H1 (cell line): ENCODE measurements at regions of chr5 and their contacts with region 1.

Region 1: DNA sequence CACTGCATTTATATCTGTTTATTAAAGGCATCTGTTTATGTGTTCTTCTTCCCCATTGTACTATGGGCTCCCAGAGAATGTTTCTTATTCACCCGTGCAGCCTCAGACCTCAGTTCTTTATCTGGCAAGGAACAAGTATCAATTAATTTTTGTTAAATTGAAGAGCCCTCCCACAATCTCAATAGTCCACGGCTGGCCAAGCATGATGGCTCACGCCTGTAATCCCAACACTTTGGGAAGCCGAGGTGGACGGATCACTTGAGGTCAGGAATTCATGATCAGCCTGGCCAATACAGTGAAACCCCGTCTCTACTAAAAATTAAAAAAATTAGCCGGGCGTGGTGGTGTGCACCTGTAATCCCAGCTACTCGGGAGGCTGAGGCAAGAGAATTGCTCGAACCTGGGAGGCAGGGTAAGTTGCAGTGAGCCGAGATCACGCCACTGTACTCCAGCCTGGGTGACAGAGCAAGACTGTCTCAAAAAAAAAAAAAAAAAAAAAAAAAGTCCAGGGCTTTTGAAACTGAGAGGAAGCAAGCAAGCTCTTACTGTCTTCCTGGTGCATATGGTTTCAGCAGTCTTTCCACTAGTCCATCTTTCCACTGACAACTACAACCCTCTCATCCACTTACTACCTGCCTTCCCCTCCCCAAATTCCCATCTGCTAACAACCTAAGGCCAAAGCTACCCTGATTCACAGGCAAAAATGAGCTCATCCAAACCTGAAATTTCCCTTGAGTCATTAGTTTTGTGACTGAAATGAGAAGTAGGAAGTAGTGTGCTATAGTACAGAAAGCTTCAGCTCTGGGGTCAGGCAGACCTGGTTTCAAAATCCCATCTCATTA is 2.3 kb upstream of the HK3 start:
- DNase-seq: no peak
- H3K4me3 ChIP-seq: no peak overlapping the region
- H3K27ac ChIP-seq: no peak overlapping the region
- H3K4me1 ChIP-seq: peaks cover 0 to 6% (median 3%) of the 10 kb centered on the region in 4 experiments; a peak in 5 of 7 replicates
- H3K27me3 ChIP-seq: no peaks in the 10 kb centered on the region
- CTCF ChIP-seq: no peak
- EP300 ChIP-seq: no peak
- POLR2A ChIP-seq: no peak
- RAD21 ChIP-seq: no peak

Region 2: GRCh38 chr5:176870110-176870593 is 31.3 kb before region 1 on chr5:
- CTCF ChIA-PET with region 1: interaction called, 21 read pairs
- POLR2A ChIA-PET with region 1: no interaction called
- DNase-seq: peak; percentile 21 to 84
- H3K4me3 ChIP-seq: no peak overlapping the region
- H3K27ac ChIP-seq: no peak overlapping the region
- H3K4me1 ChIP-seq: peaks cover 0 to 15% (median 5%) of the 10 kb centered on the region in 4 experiments; a peak in 6 of 7 replicates
- H3K27me3 ChIP-seq: no peaks in the 10 kb centered on the region
- CTCF ChIP-seq: peak in 2 of 3 experiments; percentile 80 to 92; a peak in 3 of 4 replicates
- EP300 ChIP-seq: no peak
- POLR2A ChIP-seq: no peak
- RAD21 ChIP-seq: peak; percentile 58 to 77

Region 3: GRCh38 chr5:176875783-176876505 is 25.5 kb before region 1 on chr5:
- CTCF ChIA-PET with region 1: interaction called, 21 read pairs
- POLR2A ChIA-PET with region 1: no interaction called
- DNase-seq: no peak
- H3K4me3 ChIP-seq: no peak overlapping the region
- H3K27ac ChIP-seq: no peak overlapping the region
- H3K4me1 ChIP-seq: peaks cover 0 to 4% (median 1%) of the 10 kb centered on the region in 4 experiments; a peak in 3 of 7 replicates
- H3K27me3 ChIP-seq: no peaks in the 10 kb centered on the region
- CTCF ChIP-seq: no peak
- EP300 ChIP-seq: no peak
- POLR2A ChIP-seq: no peak
- RAD21 ChIP-seq: no peak

Region 4: GRCh38 chr5:176887252-176887849 is 14.1 kb before region 1 on chr5:
- CTCF ChIA-PET with region 1: interaction called, 10 read pairs
- POLR2A ChIA-PET with region 1: interaction called, 3 read pairs
- DNase-seq: no peak
- H3K4me3 ChIP-seq: no peak overlapping the region
- H3K27ac ChIP-seq: no peak overlapping the region
- H3K4me1 ChIP-seq: no peaks in the 10 kb centered on the region
- H3K27me3 ChIP-seq: no peaks in the 10 kb centered on the region
- CTCF ChIP-seq: peak in 2 of 3 experiments; percentile 45 to 50; a peak in 2 of 4 replicates
- EP300 ChIP-seq: no peak
- POLR2A ChIP-seq: no peak
- RAD21 ChIP-seq: peak; percentile 58 to 69